AG04450 (cell line): ENCODE measurements at regions of chr2 and their contacts with region 1.

Region 1: DNA sequence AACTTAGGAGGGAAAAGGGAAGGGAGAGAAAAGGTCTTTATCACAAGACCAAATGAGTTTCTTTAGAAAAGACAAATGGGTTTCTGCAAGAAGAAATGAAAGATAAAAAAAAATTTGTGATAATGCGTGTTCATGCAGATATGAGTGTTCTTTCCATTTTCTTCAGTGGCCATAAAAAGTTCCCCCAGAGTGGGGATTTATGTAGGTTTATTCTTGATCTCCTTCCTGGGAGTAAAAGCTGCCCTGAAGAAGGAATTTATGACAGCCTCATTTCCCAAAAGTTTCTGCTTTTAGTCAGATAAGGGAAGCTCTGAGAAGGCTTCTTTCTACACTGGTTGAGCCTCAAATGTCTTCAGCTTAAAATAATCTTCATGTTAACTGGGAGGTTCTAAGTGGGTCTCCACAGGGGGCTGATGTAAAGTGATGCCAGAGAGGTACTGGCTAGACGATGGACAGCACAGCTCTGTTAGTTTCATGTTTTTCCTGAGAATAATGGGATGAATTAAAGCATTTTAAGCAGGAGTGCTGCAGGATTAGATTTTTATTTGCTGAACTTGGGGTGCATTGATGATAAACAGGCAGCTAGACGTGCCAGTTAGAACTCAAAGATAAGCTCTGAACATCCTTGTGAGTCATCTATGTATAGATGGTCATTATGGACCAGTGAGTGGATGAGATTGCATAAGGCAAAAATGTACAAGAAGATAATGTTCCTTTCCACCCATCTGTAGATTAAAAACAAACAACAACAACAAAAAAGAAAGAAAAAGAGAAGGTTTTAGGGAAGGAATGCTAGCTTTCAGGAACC is 99.4 kb upstream of the MSH2 start:
- DNase-seq: no peak
- H3K4me3 ChIP-seq: no peak overlapping the region
- H3K27ac ChIP-seq: no peak overlapping the region
- H3K27me3 ChIP-seq: no peaks in the 10 kb centered on the region
- CTCF ChIP-seq: no peak

Region 2: GRCh38 chr2:47169784-47170183 is 133.8 kb before region 1 on chr2:
- CTCF ChIA-PET with region 1: interaction called, 10 read pairs
- POLR2A ChIA-PET with region 1: interaction called, 10 read pairs
- DNase-seq: no peak
- H3K4me3 ChIP-seq: no peak overlapping the region
- H3K27ac ChIP-seq: no peak overlapping the region
- H3K27me3 ChIP-seq: no peaks in the 10 kb centered on the region
- CTCF ChIP-seq: no peak

Region 3: GRCh38 chr2:47373747-47374146 is 70.2 kb after region 1 on chr2:
- CTCF ChIA-PET with region 1: no interaction called
- POLR2A ChIA-PET with region 1: no interaction called
- DNase-seq: no peak
- H3K4me3 ChIP-seq: no peak overlapping the region
- H3K27ac ChIP-seq: no peak overlapping the region
- H3K27me3 ChIP-seq: peaks cover 23% of the 10 kb centered on the region
- CTCF ChIP-seq: no peak

Region 4: DNA sequence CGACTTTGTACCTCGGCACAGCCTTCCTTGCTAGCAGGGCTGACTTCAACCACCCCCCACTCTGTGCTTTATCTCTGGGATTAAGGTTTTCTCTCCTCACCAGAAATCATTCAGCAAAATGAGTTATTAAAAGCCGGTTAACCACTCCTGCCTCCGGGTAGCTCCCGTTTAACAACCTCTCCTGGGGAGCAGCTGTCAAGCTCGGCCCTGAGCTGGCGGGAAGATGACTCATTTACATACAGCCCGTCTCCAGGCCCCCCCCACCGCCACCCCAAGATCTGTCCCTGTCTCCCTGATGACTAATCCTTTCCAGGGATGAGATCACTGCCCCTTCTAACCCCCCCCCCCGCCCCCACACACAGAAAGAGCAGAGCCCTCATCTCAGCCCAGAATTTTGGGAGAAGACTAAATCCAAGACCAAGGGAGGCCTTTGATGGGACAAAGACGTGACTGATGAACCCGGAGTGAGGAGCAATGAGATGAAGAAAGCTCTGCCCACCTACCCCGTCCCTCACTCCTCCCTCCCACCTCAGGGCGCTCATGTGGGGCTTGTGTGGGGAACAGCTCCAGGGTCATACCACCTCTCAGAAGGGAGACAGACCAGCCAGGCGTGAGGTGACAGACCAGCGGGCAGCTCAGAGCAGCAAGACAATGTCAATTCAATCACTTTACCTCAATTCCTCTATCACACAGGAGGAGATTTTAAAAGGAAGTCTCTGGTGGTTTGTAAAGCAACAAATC is 230.8 kb after region 1 on chr2:
- CTCF ChIA-PET with region 1: no interaction called
- POLR2A ChIA-PET with region 1: no interaction called
- DNase-seq: peak; percentile 55
- H3K4me3 ChIP-seq: no peak overlapping the region
- H3K27ac ChIP-seq: peak overlapping the region; percentile 3
- H3K27me3 ChIP-seq: no peaks in the 10 kb centered on the region
- CTCF ChIP-seq: no peak